HepG2 (cell line): ENCODE measurements at regions of chr3 and their contacts with region 1.

Region 1: GRCh38 chr3:141913150-141913811 is 36.8 kb downstream of the ATP1B3 start:
- DNase-seq: peak; percentile 62
- ATAC-seq: peak; percentile 83
- H3K4me3 ChIP-seq: no peak overlapping the region
- H3K27ac ChIP-seq: no peak overlapping the region
- H3K4me1 ChIP-seq: no peaks in the 10 kb centered on the region
- H3K27me3 ChIP-seq: no peaks in the 10 kb centered on the region
- CTCF ChIP-seq: peak; percentile 80
- EP300 ChIP-seq: no peak
- POLR2A ChIP-seq: no peak
- RAD21 ChIP-seq: peak; percentile 65; the same call in 1 of the 2 replicates

Region 2: GRCh38 chr3:141575879-141576743 is 337.2 kb before region 1 on chr3:
- CTCF ChIA-PET with region 1: interaction called, 12 read pairs
- POLR2A ChIA-PET with region 1: no interaction called
- in situ Hi-C with region 1: no loop called
- intact Hi-C with region 1: loop called (anchors 1 kb)
- DNase-seq: peak; percentile 7
- ATAC-seq: peak; percentile 61; the same call in 2 of the 3 replicates
- H3K4me3 ChIP-seq: no peak overlapping the region
- H3K27ac ChIP-seq: no peak overlapping the region
- H3K4me1 ChIP-seq: no peaks in the 10 kb centered on the region
- H3K27me3 ChIP-seq: no peaks in the 10 kb centered on the region
- CTCF ChIP-seq: peak; percentile 36
- EP300 ChIP-seq: no peak
- POLR2A ChIP-seq: no peak
- RAD21 ChIP-seq: no peak